ENCODE measurements at regions of chr22 and their contacts with region 1.

Region 1: DNA sequence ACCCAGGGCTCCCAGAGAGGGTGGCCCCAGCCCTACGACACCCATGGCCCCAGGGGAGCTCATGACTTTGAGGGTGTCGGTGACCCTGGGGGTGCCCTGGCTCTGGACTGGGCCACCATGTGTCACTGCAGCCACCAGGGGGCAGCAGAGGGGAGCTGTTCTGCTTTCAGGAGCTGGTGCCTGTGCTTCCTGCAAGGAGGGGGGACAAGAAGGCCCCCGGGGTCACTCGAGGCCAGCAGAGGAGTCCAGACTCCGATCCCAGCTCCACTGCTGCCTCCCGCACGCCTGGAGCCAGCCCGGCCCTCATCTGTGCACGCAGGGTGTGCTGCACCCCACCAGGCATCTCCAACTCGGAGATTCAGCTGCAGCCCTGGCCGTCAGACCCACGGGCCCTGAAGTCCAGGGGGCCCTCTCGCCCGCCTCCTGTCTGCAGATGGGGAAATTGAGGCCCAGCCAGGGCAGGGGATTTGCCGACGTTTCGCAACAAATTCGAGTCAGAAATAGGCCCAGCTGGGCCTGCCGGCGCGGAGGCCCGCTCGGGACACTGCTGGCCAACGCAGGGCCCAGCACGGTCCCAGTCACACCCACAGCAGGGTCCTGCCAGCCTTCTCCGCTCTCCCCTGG is 29.5 kb upstream of the WNT7B start:
- DNase-seq: peak; percentile 91
- H3K4me3 Mint-ChIP-seq: no peak overlapping the region
- H3K27ac Mint-ChIP-seq: no peak overlapping the region
- H3K4me1 Mint-ChIP-seq: peaks cover 9% of the 10 kb centered on the region
- H3K27me3 Mint-ChIP-seq: no peaks in the 10 kb centered on the region

Region 2: GRCh38 chr22:45678961-45679912 is 327.3 kb before region 1 on chr22:
- CTCF ChIA-PET with region 1: no interaction called
- intact Hi-C with region 1: no loop called
- DNase-seq: no peak
- H3K4me3 Mint-ChIP-seq: no peak overlapping the region
- H3K27ac Mint-ChIP-seq: no peak overlapping the region
- H3K4me1 Mint-ChIP-seq: peaks cover 29% of the 10 kb centered on the region
- H3K27me3 Mint-ChIP-seq: no peaks in the 10 kb centered on the region

Region 3: GRCh38 chr22:45966320-45966894 is 40.1 kb before region 1 on chr22:
- CTCF ChIA-PET with region 1: no interaction called
- intact Hi-C with region 1: no loop called
- DNase-seq: no peak
- H3K4me3 Mint-ChIP-seq: no peak overlapping the region
- H3K27ac Mint-ChIP-seq: no peak overlapping the region
- H3K4me1 Mint-ChIP-seq: peaks cover 1% of the 10 kb centered on the region
- H3K27me3 Mint-ChIP-seq: peaks cover 32% of the 10 kb centered on the region

Region 4: GRCh38 chr22:45994491-45995404 is 11.7 kb before region 1 on chr22:
- CTCF ChIA-PET with region 1: interaction called, 40 read pairs
- intact Hi-C with region 1: no loop called
- DNase-seq: peak; percentile 88
- H3K4me3 Mint-ChIP-seq: no peak overlapping the region
- H3K27ac Mint-ChIP-seq: no peak overlapping the region
- H3K4me1 Mint-ChIP-seq: no peaks in the 10 kb centered on the region
- H3K27me3 Mint-ChIP-seq: no peaks in the 10 kb centered on the region

Region 5: GRCh38 chr22:46019351-46019750 is 12.9 kb after region 1 on chr22:
- CTCF ChIA-PET with region 1: interaction called, 14 read pairs
- intact Hi-C with region 1: no loop called
- DNase-seq: no peak
- H3K4me3 Mint-ChIP-seq: no peak overlapping the region
- H3K27ac Mint-ChIP-seq: no peak overlapping the region
- H3K4me1 Mint-ChIP-seq: no peaks in the 10 kb centered on the region
- H3K27me3 Mint-ChIP-seq: no peaks in the 10 kb centered on the region

Region 6: DNA sequence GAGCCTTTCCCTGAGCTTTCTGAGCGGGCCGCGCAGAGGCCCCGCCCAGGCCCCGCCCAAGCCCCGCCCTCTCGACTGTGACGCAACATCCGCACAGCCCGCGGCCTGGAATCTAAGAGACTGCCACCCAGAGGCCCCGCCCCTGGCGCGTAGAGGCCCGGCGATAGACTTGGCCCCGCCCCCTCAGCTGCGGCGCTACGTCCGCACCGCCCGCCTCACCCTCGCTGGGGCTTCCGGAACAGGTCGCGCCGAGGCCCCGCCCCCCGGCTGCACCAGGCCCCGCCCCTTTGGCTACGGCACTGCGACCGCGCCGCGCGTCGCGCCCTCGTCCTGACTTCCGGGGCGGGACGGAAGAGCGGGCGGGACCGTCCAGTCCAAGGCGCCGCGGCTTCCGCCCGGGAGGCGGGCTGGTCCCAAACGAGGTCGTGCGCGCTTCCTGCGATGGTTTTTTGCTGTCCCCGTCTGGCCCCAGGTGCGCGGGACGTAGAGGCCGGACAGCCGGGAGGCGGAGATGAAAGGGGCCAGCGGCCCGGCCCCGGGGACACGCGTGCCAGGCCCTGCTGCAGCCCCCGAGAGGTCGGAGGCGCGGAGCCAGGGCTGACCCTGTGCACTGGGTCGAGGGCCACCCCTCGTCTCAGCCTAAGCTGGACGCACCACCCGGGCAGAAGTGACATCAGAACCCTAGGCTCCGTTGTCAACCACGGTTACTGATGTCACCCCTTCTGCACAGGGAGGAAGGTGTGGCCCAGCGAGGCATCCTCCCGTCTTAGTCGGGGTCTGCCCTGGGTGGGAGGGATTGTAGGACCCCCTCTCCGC is 29.5 kb after region 1 on chr22:
- CTCF ChIA-PET with region 1: interaction called, 43 read pairs
- intact Hi-C with region 1: loop called (anchors 1 kb)
- DNase-seq: peak; percentile 100
- H3K4me3 Mint-ChIP-seq: peak overlapping the region; percentile 86
- H3K27ac Mint-ChIP-seq: peak overlapping the region; percentile 85
- H3K4me1 Mint-ChIP-seq: peaks cover 15% of the 10 kb centered on the region
- H3K27me3 Mint-ChIP-seq: no peaks in the 10 kb centered on the region

Region 7: DNA sequence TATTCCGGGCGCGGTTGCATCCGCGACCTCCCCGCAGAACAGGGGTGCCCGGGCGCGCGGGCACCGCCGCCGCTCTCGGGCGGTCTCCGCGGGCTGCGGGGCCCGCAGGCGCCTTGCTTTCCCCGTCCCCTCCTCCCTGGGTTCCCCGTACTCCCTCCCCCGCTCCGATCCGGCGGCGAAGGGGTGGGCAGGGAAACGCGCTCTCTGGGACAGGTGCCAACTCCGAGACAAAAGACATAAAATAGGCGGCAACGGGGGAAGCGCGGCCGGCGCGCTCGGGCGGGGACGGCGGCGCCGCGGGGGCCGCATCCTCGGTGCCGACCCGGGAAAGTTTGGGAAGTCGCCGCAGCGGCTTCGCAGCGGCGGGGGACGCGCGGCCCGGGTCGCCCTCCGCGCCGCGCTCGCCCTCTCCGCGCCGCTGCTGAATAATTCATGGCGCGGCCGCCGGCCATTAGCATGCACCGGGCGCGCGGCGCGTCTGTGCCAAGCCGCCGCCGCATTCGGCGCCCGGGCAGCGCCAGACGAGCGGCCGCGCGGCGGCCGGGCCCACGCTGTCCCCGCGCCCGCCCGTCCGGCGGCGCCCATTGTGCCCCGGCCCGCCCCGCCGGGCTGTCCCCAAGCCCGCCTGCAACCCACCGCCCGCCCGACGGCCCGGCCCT is 65.1 kb after region 1 on chr22:
- CTCF ChIA-PET with region 1: interaction called, 17 read pairs
- intact Hi-C with region 1: no loop called
- DNase-seq: peak; percentile 76
- H3K4me3 Mint-ChIP-seq: peak overlapping the region; percentile 83
- H3K27ac Mint-ChIP-seq: peak overlapping the region; percentile 87
- H3K4me1 Mint-ChIP-seq: peaks cover 49% of the 10 kb centered on the region
- H3K27me3 Mint-ChIP-seq: no peaks in the 10 kb centered on the region

Region 8: GRCh38 chr22:46116491-46116958 is 110.0 kb after region 1 on chr22:
- CTCF ChIA-PET with region 1: interaction called, 209 read pairs
- intact Hi-C with region 1: loop called (anchors 1 kb)
- DNase-seq: peak; percentile 91
- H3K4me3 Mint-ChIP-seq: no peak overlapping the region
- H3K27ac Mint-ChIP-seq: no peak overlapping the region
- H3K4me1 Mint-ChIP-seq: no peaks in the 10 kb centered on the region
- H3K27me3 Mint-ChIP-seq: no peaks in the 10 kb centered on the region

Region 9: GRCh38 chr22:46309526-46310085 is 303.1 kb after region 1 on chr22:
- CTCF ChIA-PET with region 1: interaction called, 4 read pairs
- intact Hi-C with region 1: loop called (anchors 5 kb)
- DNase-seq: no peak
- H3K4me3 Mint-ChIP-seq: no peak overlapping the region
- H3K27ac Mint-ChIP-seq: no peak overlapping the region
- H3K4me1 Mint-ChIP-seq: peaks cover 2% of the 10 kb centered on the region
- H3K27me3 Mint-ChIP-seq: no peaks in the 10 kb centered on the region

Measured in activated naive CD4-positive, alpha-beta T cell treated with anti-CD3 and anti-CD28 coated beads for 36 hours (primary cell).